Activated naive CD4-positive, alpha-beta T cell treated with anti-CD3 and anti-CD28 coated beads for 36 hours (primary cell): ENCODE measurements at regions of chr11 and their contacts with region 1.

Region 1: GRCh38 chr11:112086422-112087191 is at the starts of genes SDHD and TIMM8B:
- DNase-seq: peak; percentile 98
- H3K4me3 Mint-ChIP-seq: peak within 1 kb of the TSS; percentile 97
- H3K27ac Mint-ChIP-seq: peak within 1 kb of the TSS; percentile 93
- H3K4me1 Mint-ChIP-seq: peaks cover 67% of the 10 kb centered on the region
- H3K27me3 Mint-ChIP-seq: no peaks in the 10 kb centered on the region
- total RNA-seq, gene SDHD: 101 to 115 TPM
- total RNA-seq, gene TIMM8B: 35.4 to 41.7 TPM

Region 2: GRCh38 chr11:111870886-111871692 is 215.5 kb before region 1 on chr11 and contains the start of gene ALG9:
- CTCF ChIA-PET with region 1: no interaction called
- intact Hi-C with region 1: loop called (anchors 1 kb)
- DNase-seq: peak; percentile 93
- H3K4me3 Mint-ChIP-seq: peak within 1 kb of the TSS; percentile 89
- H3K27ac Mint-ChIP-seq: peak within 1 kb of the TSS; percentile 83
- H3K4me1 Mint-ChIP-seq: peaks cover 25% of the 10 kb centered on the region
- H3K27me3 Mint-ChIP-seq: no peaks in the 10 kb centered on the region
- total RNA-seq, gene ALG9: 21.3 to 21.9 TPM

Region 3: GRCh38 chr11:111926505-111927391 is 159.9 kb before region 1 on chr11:
- CTCF ChIA-PET with region 1: interaction called, 7 read pairs
- intact Hi-C with region 1: loop called (anchors 1 kb)
- DNase-seq: peak; percentile 95
- H3K4me3 Mint-ChIP-seq: peak overlapping the region; percentile 82
- H3K27ac Mint-ChIP-seq: peak overlapping the region; percentile 88
- H3K4me1 Mint-ChIP-seq: peaks cover 12% of the 10 kb centered on the region
- H3K27me3 Mint-ChIP-seq: no peaks in the 10 kb centered on the region

Region 4: GRCh38 chr11:112024773-112025678 is 61.6 kb before region 1 on chr11 and contains the start of gene DLAT:
- CTCF ChIA-PET with region 1: interaction called, 4 read pairs
- intact Hi-C with region 1: loop called (anchors 1 kb)
- DNase-seq: peak; percentile 89
- H3K4me3 Mint-ChIP-seq: peak within 1 kb of the TSS; percentile 100
- H3K27ac Mint-ChIP-seq: peak within 1 kb of the TSS; percentile 100
- H3K4me1 Mint-ChIP-seq: peaks cover 28% of the 10 kb centered on the region
- H3K27me3 Mint-ChIP-seq: no peaks in the 10 kb centered on the region
- total RNA-seq, gene DLAT: 34.2 to 36.8 TPM

Region 5: DNA sequence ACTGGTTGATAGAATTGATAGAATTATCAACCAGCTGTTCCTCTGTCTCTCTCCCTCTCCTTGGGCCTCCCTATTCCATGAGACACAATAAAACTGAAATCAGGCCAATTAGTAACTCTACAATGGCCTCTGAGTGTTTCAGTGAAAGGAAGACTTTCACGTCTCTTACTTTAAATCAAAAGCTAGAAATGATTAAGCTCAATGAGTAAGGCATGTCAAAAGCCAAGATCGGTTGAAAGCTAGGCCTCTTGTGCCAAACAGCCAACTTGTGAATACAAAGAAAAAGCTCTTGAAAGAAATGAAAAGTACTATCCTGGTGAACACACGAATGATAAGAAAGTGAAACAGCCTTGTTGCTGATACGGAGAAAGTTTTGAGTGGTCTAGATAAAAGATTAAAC is 29.4 kb before region 1 on chr11:
- CTCF ChIA-PET with region 1: interaction called, 3 read pairs
- intact Hi-C with region 1: loop called (anchors 2 kb)
- DNase-seq: peak; percentile 35
- H3K4me3 Mint-ChIP-seq: no peak overlapping the region
- H3K27ac Mint-ChIP-seq: peak overlapping the region; percentile 84
- H3K4me1 Mint-ChIP-seq: peaks cover 15% of the 10 kb centered on the region
- H3K27me3 Mint-ChIP-seq: no peaks in the 10 kb centered on the region

Region 6: DNA sequence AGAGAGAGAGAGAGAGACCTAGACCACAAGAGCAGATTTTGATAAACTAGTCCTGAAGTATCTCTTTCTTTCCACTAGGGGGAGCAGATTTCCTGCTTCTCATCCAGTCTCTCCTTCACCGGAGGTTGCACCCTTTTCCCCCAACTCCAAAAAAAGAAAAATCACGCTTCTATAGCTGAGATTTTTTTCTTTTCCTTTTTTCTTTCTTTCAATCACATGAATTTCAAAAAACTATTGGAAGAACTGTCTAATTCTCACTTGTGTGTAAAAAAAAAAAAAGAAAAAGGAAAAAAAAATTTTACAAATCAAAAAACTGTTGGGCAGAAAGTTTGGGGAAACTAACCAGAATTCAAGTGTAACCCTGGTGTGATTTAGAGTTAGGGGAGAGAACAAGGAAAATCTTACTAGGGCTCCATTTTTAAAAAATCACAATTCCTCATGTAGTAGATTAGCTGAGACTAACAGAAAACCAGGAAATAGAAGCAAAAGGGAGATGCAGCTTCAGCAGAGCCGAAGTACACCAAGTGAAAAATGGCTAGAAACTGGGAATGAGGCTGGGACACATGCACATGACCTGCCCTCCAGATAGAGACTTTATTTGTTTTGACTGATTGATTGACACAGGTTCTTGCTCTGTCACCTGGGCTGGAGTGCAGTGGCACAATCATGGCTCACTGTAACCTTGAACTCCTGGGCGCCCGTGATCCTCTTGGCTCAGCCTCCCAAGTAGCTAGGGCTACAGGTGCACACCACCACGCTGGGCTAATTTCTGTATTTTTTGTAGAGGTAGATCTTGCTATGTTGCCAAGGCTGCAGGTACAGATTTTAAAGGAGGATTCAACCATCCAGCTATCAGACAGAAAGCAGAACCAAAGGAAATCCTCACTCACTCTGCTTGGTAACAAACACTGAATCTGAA is 27.2 kb after region 1 on chr11:
- CTCF ChIA-PET with region 1: interaction called, 13 read pairs
- intact Hi-C with region 1: no loop called
- DNase-seq: no peak
- H3K4me3 Mint-ChIP-seq: no peak overlapping the region
- H3K27ac Mint-ChIP-seq: no peak overlapping the region
- H3K4me1 Mint-ChIP-seq: peaks cover 8% of the 10 kb centered on the region
- H3K27me3 Mint-ChIP-seq: no peaks in the 10 kb centered on the region

Region 7: DNA sequence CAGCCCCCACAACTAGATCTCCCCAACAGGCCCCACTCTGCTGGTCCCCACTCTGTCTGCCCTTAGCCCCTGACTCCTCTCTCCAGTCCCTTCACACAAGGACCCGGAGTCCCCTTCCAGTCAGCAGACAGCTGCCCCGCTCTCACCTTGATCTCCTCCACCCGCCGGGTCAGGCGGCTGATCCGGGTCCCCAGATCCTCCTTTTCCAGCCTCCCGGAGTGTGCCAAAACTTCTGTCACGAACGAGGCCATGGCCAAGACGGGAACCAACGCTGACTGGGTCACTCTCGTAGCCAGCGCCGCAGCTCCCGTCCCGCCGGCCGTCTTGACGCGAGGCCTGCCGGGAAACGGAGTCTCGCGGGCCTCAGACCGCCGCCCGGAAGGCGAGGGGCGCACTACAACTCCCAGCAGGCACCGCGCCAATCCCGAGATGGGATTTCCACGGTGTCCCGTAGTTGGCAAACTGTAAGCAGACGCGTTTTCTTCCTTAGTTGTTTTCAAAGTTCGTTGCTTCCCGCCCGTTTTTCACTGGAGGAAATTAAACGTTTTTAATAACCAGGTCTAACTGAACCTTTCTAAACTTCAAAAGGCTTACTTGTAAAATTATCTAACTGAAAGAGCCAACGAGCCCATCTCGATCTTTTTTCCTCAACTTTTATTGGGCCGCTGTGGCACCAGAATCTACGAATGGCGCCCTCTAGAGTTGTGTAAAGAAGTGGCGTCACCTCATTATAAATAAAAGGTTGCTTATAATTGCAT is 1687.0 kb after region 1 on chr11 and contains the start of gene ZW10:
- CTCF ChIA-PET with region 1: no interaction called
- intact Hi-C with region 1: loop called (anchors 10 kb)
- DNase-seq: peak; percentile 94
- H3K4me3 Mint-ChIP-seq: peak within 1 kb of the TSS; percentile 100
- H3K27ac Mint-ChIP-seq: peak within 1 kb of the TSS; percentile 96
- H3K4me1 Mint-ChIP-seq: peaks cover 19% of the 10 kb centered on the region
- H3K27me3 Mint-ChIP-seq: no peaks in the 10 kb centered on the region
- total RNA-seq, gene ZW10: 10.7 to 11.6 TPM